HEK293T (cell line): ENCODE measurements at regions of chr3 and their contacts with region 1.

Region 1: GRCh38 chr3:99499235-99500158 is 138.9 kb upstream of the COL8A1 start:
- DNase-seq: peak; percentile 47

Region 2: GRCh38 chr3:99384596-99384995 is 114.9 kb before region 1 on chr3:
- CTCF ChIA-PET with region 1: no interaction called
- POLR2A ChIA-PET with region 1: no interaction called
- DNase-seq: no peak

Region 3: DNA sequence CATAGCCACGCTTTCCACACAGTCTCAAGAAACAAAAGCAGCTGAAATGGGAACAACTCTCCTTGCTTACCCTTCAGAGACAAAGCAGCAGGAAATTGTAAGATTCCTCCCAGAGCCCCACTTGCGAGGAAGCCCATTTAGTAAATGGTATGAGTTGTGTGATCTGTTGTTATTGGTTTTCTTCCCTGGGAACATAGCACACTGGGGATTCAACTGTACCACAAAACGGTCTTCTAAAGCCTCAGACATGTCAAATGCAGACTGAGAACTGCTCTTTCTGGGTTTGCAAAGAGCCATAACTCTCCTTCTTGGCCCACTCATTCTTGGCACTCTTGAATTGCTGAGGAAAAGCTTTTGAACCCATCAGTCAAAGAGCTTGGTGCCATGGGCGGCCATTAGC is 37.9 kb after region 1 on chr3:
- CTCF ChIA-PET with region 1: interaction called, 13 read pairs
- POLR2A ChIA-PET with region 1: no interaction called
- DNase-seq: no peak